Dorsolateral prefrontal cortex (tissue), 120 donors: ENCODE measurements at regions of chr10 and their contacts with region 1.

Region 1: DNA sequence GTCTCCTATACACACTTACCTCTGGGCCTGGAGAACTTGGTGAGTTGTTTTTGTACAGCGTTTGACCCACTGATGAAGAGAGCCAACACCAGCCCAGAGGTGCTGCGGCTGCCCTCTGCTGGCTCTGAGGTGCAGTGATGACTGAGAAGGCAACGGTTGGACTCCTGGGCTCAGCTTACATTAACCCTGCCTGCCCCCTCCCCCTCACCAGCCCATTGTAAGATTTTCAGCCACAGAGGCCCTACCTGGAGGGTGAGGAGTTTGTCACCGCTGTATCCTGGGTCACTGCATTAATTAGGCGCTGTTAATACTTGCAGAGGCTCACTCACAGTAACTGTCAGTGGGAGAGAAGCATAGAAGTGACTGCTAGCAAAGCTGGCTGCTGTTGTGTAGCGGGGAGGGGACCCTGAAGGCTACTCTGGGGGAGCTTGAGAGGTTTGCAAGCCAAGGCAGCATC is 19.0 kb upstream of the ANKRD2 start:
- DNase-seq: peak in 9 of 10 donors; percentile 62 to 81 (median 75)
- H3K4me3 ChIP-seq: no peak overlapping the region
- H3K27ac ChIP-seq: peak overlapping the region in 6 of 59 donors; percentile 6 to 66 (median 20)
- H3K27me3 ChIP-seq: no peaks in the 10 kb centered on the region
- CTCF ChIP-seq: peak; percentile 40 to 93 (median 80)

Region 2: GRCh38 chr10:97463363-97464132 is 90.1 kb before region 1 on chr10:
- intact Hi-C with region 1: loop called (anchors 1 to 5 kb)
- DNase-seq: peak in 2 of 10 donors; percentile 25 to 50
- H3K4me3 ChIP-seq: no peak overlapping the region
- H3K27ac ChIP-seq: peak overlapping the region in 43 of 59 donors; percentile 4 to 65 (median 37)
- H3K27me3 ChIP-seq: no peaks in the 10 kb centered on the region
- CTCF ChIP-seq: peak; percentile 68 to 96 (median 88)

Region 3: GRCh38 chr10:98367604-98368451 is 814.2 kb after region 1 on chr10:
- intact Hi-C with region 1: no loop called
- DNase-seq: peak in 8 of 10 donors; percentile 16 to 72 (median 58)
- H3K4me3 ChIP-seq: peak overlapping the region in 19 of 59 donors; percentile 3 to 40 (median 12)
- H3K27ac ChIP-seq: peak overlapping the region in 54 of 59 donors; percentile 1 to 84 (median 66)
- H3K27me3 ChIP-seq: no peaks in the 10 kb centered on the region
- CTCF ChIP-seq: peak in 6 of 56 donors; percentile 13 to 35 (median 14)